Naive thymus-derived CD4-positive, alpha-beta T cell (primary cell): ENCODE measurements at regions of chr12 and their contacts with region 1.

Region 1: GRCh38 chr12:49707128-49707811 is at the start of gene FMNL3:
- DNase-seq: peak; percentile 97 to 100 (median 98)
- ATAC-seq: peak; percentile 97
- H3K4me3 ChIP-seq: peak within 1 kb of the TSS; percentile 78
- H3K4me3 Mint-ChIP-seq: peak within 1 kb of the TSS; percentile 78 to 96 (median 92)
- H3K27ac ChIP-seq: peak within 1 kb of the TSS; percentile 92
- H3K27ac Mint-ChIP-seq: peak within 1 kb of the TSS; percentile 72 to 94 (median 89)
- H3K4me1 ChIP-seq: peaks cover 11 to 32% of the 10 kb centered on the region in 2 donors
- H3K4me1 Mint-ChIP-seq: peaks cover 38 to 49% (median 46%) of the 10 kb centered on the region in 7 donors
- H3K27me3 ChIP-seq: no peaks in the 10 kb centered on the region
- H3K27me3 Mint-ChIP-seq: peaks cover 0 to 29% (median 0%) of the 10 kb centered on the region in 5 donors
- total RNA-seq, gene FMNL3: 33.3 to 40.4 (median 39.7) TPM

Region 2: GRCh38 chr12:49358483-49359141 is 348.7 kb before region 1 on chr12:
- CTCF ChIA-PET with region 1: no interaction called
- POLR2A ChIA-PET with region 1: no interaction called
- intact Hi-C with region 1: loop called (anchors 2 to 10 kb)
- DNase-seq: peak in 7 of 9 donors; percentile 48 to 75 (median 63)
- ATAC-seq: peak; percentile 95
- H3K4me3 ChIP-seq: no peak overlapping the region
- H3K4me3 Mint-ChIP-seq: no peak overlapping the region
- H3K27ac ChIP-seq: no peak overlapping the region
- H3K27ac Mint-ChIP-seq: no peak overlapping the region
- H3K4me1 ChIP-seq: no peaks in the 10 kb centered on the region
- H3K4me1 Mint-ChIP-seq: peaks cover 0 to 7% (median 4%) of the 10 kb centered on the region in 7 donors
- H3K27me3 ChIP-seq: no peaks in the 10 kb centered on the region
- H3K27me3 Mint-ChIP-seq: peaks cover 8 to 48% (median 30%) of the 10 kb centered on the region in 5 donors

Region 3: GRCh38 chr12:49567611-49568441 is 139.4 kb before region 1 on chr12 and contains the start of gene MCRS1:
- CTCF ChIA-PET with region 1: interaction called, 3 read pairs
- POLR2A ChIA-PET with region 1: no interaction called
- intact Hi-C with region 1: loop called (anchors 1 to 5 kb)
- DNase-seq: peak; percentile 89 to 94 (median 91)
- ATAC-seq: peak; percentile 92
- H3K4me3 ChIP-seq: peak within 1 kb of the TSS; percentile 81
- H3K4me3 Mint-ChIP-seq: peak within 1 kb of the TSS; percentile 94 to 100 (median 99)
- H3K27ac ChIP-seq: peak within 1 kb of the TSS; percentile 91
- H3K27ac Mint-ChIP-seq: peak within 1 kb of the TSS; percentile 98 to 100 (median 99)
- H3K4me1 ChIP-seq: peaks cover 33 to 42% of the 10 kb centered on the region in 2 donors
- H3K4me1 Mint-ChIP-seq: peaks cover 45 to 76% (median 61%) of the 10 kb centered on the region in 7 donors
- H3K27me3 ChIP-seq: no peaks in the 10 kb centered on the region
- H3K27me3 Mint-ChIP-seq: peaks cover 0 to 3% (median 0%) of the 10 kb centered on the region in 5 donors
- total RNA-seq, gene MCRS1: 70.0 to 85.2 (median 71.4) TPM

Region 4: GRCh38 chr12:49644620-49644994 is 62.7 kb before region 1 on chr12:
- CTCF ChIA-PET with region 1: interaction called, 229 read pairs
- POLR2A ChIA-PET with region 1: interaction called, 29 read pairs
- intact Hi-C with region 1: loop called (anchors 1 kb)
- DNase-seq: peak; percentile 71 to 86 (median 81)
- ATAC-seq: peak; percentile 96
- H3K4me3 ChIP-seq: no peak overlapping the region
- H3K4me3 Mint-ChIP-seq: peak overlapping the region in 9 of 10 donors; percentile 3 to 69 (median 41)
- H3K27ac ChIP-seq: peak overlapping the region; percentile 32
- H3K27ac Mint-ChIP-seq: peak overlapping the region; percentile 78 to 96 (median 89)
- H3K4me1 ChIP-seq: peaks cover 7 to 10% of the 10 kb centered on the region in 2 donors
- H3K4me1 Mint-ChIP-seq: peaks cover 25 to 56% (median 37%) of the 10 kb centered on the region in 7 donors
- H3K27me3 ChIP-seq: no peaks in the 10 kb centered on the region
- H3K27me3 Mint-ChIP-seq: no peaks in the 10 kb centered on the region

Region 5: DNA sequence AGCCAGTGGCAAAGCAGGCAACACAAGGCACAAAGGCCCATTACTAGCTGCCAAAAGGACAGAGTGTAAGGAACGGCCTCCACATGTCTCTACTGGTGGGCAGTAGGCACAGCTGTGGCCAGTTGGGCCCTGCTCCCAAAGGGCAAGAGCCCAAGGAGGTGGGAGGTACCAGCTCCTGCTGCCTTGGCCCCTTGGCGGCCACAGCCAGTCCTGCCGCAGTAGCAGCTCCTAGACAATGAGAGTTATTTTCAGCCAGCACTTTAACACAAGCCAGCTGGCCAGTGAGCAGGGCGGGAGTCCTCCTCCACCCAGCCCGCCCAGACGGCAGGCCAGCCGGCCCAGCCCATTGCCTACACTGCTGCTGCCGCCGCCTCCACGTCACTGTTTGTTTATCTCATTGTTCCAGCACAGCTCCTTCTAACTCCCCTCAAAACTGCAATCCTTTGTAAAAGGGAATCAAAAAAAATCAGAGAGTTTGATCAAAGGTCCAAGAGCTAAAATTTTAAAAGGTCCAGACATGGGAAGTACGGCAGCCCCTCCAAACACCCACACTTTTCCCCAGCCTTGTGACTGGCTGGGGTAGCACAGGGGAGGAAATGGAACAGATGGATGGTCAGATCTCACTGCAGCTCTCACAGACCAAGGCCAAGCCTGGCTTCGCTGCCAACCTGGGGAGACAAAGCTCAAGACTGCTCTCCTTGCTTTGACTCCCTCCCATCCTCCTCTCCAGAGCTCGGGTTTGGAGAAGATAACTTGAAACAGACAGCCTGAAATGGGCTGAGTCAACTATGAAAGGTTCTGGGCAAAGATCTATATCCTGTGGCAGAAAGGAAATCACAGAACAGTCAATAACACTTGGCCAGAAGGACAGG is 33.6 kb before region 1 on chr12:
- CTCF ChIA-PET with region 1: interaction called, 48 read pairs
- POLR2A ChIA-PET with region 1: interaction called, 131 read pairs
- intact Hi-C with region 1: loop called (anchors 1 kb)
- DNase-seq: peak in 3 of 9 donors; percentile 11 to 26 (median 12)
- ATAC-seq: no peak
- H3K4me3 ChIP-seq: no peak overlapping the region
- H3K4me3 Mint-ChIP-seq: peak overlapping the region; percentile 18 to 85 (median 70)
- H3K27ac ChIP-seq: peak overlapping the region; percentile 85
- H3K27ac Mint-ChIP-seq: peak overlapping the region; percentile 71 to 99 (median 96)
- H3K4me1 ChIP-seq: peaks cover 39 to 64% of the 10 kb centered on the region in 2 donors
- H3K4me1 Mint-ChIP-seq: peaks cover 60 to 92% (median 92%) of the 10 kb centered on the region in 7 donors
- H3K27me3 ChIP-seq: no peaks in the 10 kb centered on the region
- H3K27me3 Mint-ChIP-seq: no peaks in the 10 kb centered on the region

Region 6: DNA sequence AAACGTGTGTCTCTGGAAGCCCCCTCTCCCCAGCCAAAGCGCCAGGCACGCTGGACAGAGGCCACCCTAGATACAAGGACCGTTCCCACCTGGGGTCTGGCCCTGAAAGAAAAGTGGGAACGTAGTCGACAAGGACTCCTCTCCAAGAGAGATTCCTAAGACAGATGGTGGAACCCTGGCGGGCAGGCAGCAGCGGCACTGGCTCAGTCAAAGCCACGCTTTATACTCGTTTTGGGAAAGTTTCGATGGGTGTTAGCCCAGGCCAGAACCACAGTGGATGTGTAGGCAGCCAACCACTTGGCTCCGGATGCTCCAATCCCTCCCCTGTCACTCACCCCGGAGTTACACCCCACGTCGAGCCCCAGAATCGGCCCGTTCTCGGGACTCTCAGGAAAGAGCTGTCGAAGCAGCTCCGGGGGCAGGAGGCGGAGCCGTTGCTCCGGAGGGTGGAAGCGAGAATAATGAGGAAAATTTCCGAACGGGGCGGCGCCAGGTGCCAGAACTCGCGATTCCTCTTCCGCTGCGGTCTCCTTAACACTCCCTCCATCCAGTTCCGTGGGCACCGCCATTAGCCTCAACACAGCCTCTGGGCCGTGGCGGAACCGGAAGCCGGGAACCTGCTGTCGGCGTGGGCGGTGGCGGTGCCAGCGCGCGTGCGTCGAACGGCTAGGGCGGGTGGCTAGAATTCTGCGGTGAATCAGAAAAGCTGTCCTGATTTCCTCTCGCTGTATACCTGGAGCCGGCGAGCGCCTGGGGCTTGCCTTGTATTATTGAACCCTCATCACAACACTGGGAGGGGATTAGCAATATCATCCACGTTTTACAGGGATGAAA is 135.5 kb after region 1 on chr12 and contains the start of gene BCDIN3D:
- CTCF ChIA-PET with region 1: interaction called, 4 read pairs
- POLR2A ChIA-PET with region 1: no interaction called
- intact Hi-C with region 1: loop called in 1 of 2 experiments (anchors 1 kb)
- DNase-seq: peak; percentile 83 to 95 (median 91)
- ATAC-seq: peak; percentile 96
- H3K4me3 ChIP-seq: peak within 1 kb of the TSS; percentile 73
- H3K4me3 Mint-ChIP-seq: peak within 1 kb of the TSS; percentile 85 to 100 (median 94)
- H3K27ac ChIP-seq: peak within 1 kb of the TSS; percentile 80
- H3K27ac Mint-ChIP-seq: peak within 1 kb of the TSS; percentile 90 to 98 (median 96)
- H3K4me1 ChIP-seq: peaks cover 12 to 20% of the 10 kb centered on the region in 2 donors
- H3K4me1 Mint-ChIP-seq: peaks cover 19 to 65% (median 43%) of the 10 kb centered on the region in 7 donors
- H3K27me3 ChIP-seq: no peaks in the 10 kb centered on the region
- H3K27me3 Mint-ChIP-seq: no peaks in the 10 kb centered on the region
- total RNA-seq, gene BCDIN3D: 3.7 to 17.4 (median 6.8) TPM

Region 7: GRCh38 chr12:50390284-50390683 is 683.0 kb after region 1 on chr12:
- CTCF ChIA-PET with region 1: no interaction called
- POLR2A ChIA-PET with region 1: no interaction called
- intact Hi-C with region 1: no loop called
- DNase-seq: no peak
- ATAC-seq: no peak
- H3K4me3 ChIP-seq: no peak overlapping the region
- H3K4me3 Mint-ChIP-seq: no peak overlapping the region
- H3K27ac ChIP-seq: no peak overlapping the region
- H3K27ac Mint-ChIP-seq: no peak overlapping the region
- H3K4me1 ChIP-seq: no peaks in the 10 kb centered on the region
- H3K4me1 Mint-ChIP-seq: peaks cover 0 to 1% (median 0%) of the 10 kb centered on the region in 7 donors
- H3K27me3 ChIP-seq: no peaks in the 10 kb centered on the region
- H3K27me3 Mint-ChIP-seq: no peaks in the 10 kb centered on the region